Heart right ventricle (tissue), 16 donors: ENCODE measurements at regions of chr12 and their contacts with region 1.

Region 1: GRCh38 chr12:91382081-91382543 is 199.5 kb upstream of the DCN start:
- DNase-seq: peak; percentile 79 to 89
- ATAC-seq: peak; percentile 72 to 92 (median 87)
- H3K4me3 ChIP-seq: peak overlapping the region; percentile 20 to 66 (median 50)
- H3K27ac ChIP-seq: peak overlapping the region; percentile 21 to 84 (median 75)
- H3K4me1 ChIP-seq: peaks cover 0 to 15% (median 4%) of the 10 kb centered on the region in 9 donors
- H3K27me3 ChIP-seq: no peaks in the 10 kb centered on the region
- CTCF ChIP-seq: peak; percentile 77 to 94 (median 90)

Region 2: DNA sequence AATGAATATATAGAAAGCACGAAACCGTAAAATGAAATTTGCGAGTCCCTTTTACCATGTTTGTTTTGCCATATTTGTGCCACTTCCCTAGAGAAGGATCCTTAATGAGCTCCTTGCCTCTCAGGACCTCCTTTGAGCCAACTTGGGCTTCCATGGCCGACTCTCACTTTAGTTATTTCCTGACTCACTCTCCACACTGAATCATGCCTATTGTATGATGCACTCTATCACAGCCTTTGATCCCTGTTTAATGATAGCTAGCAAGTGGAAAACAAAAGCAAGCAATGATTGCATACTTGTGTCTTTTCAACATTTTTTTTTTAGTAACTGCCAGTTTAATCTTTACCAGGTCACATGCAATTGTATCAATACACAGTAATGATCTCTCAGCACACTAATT is 580.3 kb before region 1 on chr12:
- intact Hi-C with region 1: no loop called
- DNase-seq: no peak
- ATAC-seq: no peak
- H3K4me3 ChIP-seq: no peak overlapping the region
- H3K27ac ChIP-seq: no peak overlapping the region
- H3K4me1 ChIP-seq: no peaks in the 10 kb centered on the region
- H3K27me3 ChIP-seq: no peaks in the 10 kb centered on the region
- CTCF ChIP-seq: no peak

Region 3: GRCh38 chr12:91561958-91562875 is 180.1 kb after region 1 on chr12:
- intact Hi-C with region 1: loop called in 1 of 10 experiments (anchors 10 kb)
- DNase-seq: no peak
- ATAC-seq: no peak
- H3K4me3 ChIP-seq: no peak overlapping the region
- H3K27ac ChIP-seq: peak overlapping the region in 1 of 10 donors; percentile 42
- H3K4me1 ChIP-seq: peaks cover 0 to 3% (median 0%) of the 10 kb centered on the region in 9 donors
- H3K27me3 ChIP-seq: no peaks in the 10 kb centered on the region
- CTCF ChIP-seq: no peak

Region 4: DNA sequence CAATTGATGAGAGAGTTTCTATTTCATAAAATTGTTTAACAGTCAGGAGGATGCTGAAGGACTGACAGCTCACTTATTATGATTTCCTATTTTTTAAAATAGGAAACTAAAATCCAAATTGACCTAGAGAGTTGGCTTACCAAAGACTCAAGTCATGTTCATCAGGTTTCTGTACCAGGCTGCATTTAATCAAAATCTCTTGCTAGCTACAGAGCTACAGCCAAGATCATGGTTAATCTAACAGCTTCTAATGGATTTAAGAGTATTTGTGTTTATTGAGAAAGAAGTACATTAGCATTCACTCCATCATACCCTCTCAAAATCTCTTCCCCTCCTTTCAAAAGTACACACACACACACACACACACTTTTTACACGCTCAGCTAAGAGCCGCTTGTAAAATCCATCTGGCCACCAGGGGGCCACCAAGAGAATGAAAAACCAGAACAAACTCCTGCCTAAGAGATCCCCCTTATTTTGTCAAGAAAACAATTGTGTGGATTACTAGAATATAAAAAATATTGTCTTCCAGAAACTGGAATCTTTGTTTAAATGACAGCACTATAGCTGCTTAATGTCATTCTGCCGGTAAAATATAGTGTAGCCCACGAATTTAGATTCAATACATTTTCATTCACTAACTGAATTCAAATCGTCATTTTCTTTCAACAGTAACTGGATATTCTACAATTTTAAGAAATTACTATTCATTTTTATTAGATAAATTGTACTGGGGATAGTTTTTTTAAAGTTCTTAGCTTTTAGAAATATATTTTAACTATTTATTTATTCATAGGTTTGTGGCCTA is 429.6 kb after region 1 on chr12:
- intact Hi-C with region 1: loop called in 5 of 10 experiments (anchors 5 to 10 kb)
- DNase-seq: peak; percentile 70 to 71
- ATAC-seq: peak in 6 of 8 donors; percentile 65 to 84 (median 75)
- H3K4me3 ChIP-seq: no peak overlapping the region
- H3K27ac ChIP-seq: peak overlapping the region in 1 of 10 donors; percentile 11
- H3K4me1 ChIP-seq: peaks cover 0 to 8% (median 0%) of the 10 kb centered on the region in 9 donors
- H3K27me3 ChIP-seq: no peaks in the 10 kb centered on the region
- CTCF ChIP-seq: peak; percentile 71 to 90 (median 84)

Region 5: GRCh38 chr12:92244036-92244435 is 861.9 kb after region 1 on chr12:
- intact Hi-C with region 1: loop called in 1 of 10 experiments (anchors 5 kb)
- DNase-seq: peak in 1 of 2 donors; percentile 60
- ATAC-seq: peak; percentile 86 to 98 (median 92)
- H3K4me3 ChIP-seq: peak overlapping the region in 1 of 10 donors; percentile 20
- H3K27ac ChIP-seq: peak overlapping the region; percentile 10 to 84 (median 56)
- H3K4me1 ChIP-seq: peaks cover 0 to 32% (median 16%) of the 10 kb centered on the region in 9 donors
- H3K27me3 ChIP-seq: no peaks in the 10 kb centered on the region
- CTCF ChIP-seq: peak in 6 of 9 donors; percentile 13 to 59 (median 33)

Region 6: GRCh38 chr12:92570056-92570753 is 1188.1 kb after region 1 on chr12:
- intact Hi-C with region 1: loop called (anchors 2 to 10 kb)
- DNase-seq: peak in 1 of 2 donors; percentile 82
- ATAC-seq: peak; percentile 67 to 92 (median 86)
- H3K4me3 ChIP-seq: no peak overlapping the region
- H3K27ac ChIP-seq: peak overlapping the region in 2 of 10 donors; percentile 23 to 58
- H3K4me1 ChIP-seq: peaks cover 0 to 38% (median 8%) of the 10 kb centered on the region in 9 donors
- H3K27me3 ChIP-seq: no peaks in the 10 kb centered on the region
- CTCF ChIP-seq: peak; percentile 70 to 89 (median 82)

Region 7: GRCh38 chr12:92649511-92650227 is 1267.6 kb after region 1 on chr12:
- intact Hi-C with region 1: loop called in 5 of 10 experiments (anchors 1 to 10 kb)
- DNase-seq: peak in 1 of 2 donors; percentile 74
- ATAC-seq: peak; percentile 80 to 95 (median 88)
- H3K4me3 ChIP-seq: no peak overlapping the region
- H3K27ac ChIP-seq: no peak overlapping the region
- H3K4me1 ChIP-seq: peaks cover 0 to 13% (median 0%) of the 10 kb centered on the region in 9 donors
- H3K27me3 ChIP-seq: no peaks in the 10 kb centered on the region
- CTCF ChIP-seq: peak in 8 of 9 donors; percentile 59 to 79 (median 72)